ENCODE measurements at regions of chr15 and their contacts with region 1.

Region 1: DNA sequence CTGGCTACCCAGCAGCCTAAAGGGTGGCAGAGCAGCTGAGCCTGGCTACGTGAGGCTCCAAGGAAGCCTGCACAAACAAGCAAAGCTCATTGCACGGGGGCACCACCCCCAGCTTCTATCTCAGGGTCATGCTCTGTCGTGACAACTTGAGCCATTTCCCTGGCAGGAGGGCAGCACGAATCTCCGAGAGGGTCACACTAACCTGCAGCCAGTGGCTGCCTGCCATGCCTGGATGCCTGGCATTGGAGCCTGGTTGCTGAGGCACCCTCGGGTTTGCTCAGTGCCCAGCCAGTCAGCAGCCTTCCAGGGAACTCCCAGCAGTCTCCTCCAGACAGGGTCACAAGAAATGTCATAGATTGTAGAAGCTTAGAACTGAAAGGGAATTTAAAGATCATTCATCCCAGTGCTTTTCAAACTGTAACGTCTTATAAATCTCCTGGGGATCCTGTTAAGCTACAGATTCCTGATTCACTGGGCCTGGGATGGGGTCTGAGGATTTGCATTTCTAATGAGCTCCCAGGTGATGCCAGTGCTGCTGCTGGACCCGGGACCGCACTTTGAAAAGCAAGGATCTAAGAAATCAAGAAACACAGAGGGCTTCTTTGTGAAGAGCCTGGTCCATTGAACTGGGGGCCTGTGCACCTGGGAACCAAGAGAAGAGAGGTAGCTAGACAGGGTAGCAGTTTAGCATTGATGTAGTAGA is 48.4 kb downstream of the TMEM266 start:
- DNase-seq: peak in 1 of 2 donors; percentile 60
- H3K4me3 ChIP-seq: no peak overlapping the region
- CTCF ChIP-seq: no peak
- POLR2A ChIP-seq: no peak

Region 2: GRCh38 chr15:76939715-76940114 is 831.5 kb after region 1 on chr15:
- intact Hi-C with region 1: loop called (anchors 5 kb)
- DNase-seq: no peak
- H3K4me3 ChIP-seq: no peak overlapping the region
- CTCF ChIP-seq: no peak
- POLR2A ChIP-seq: no peak